ENCODE measurements at regions of chr16 and their contacts with region 1.

Region 1: DNA sequence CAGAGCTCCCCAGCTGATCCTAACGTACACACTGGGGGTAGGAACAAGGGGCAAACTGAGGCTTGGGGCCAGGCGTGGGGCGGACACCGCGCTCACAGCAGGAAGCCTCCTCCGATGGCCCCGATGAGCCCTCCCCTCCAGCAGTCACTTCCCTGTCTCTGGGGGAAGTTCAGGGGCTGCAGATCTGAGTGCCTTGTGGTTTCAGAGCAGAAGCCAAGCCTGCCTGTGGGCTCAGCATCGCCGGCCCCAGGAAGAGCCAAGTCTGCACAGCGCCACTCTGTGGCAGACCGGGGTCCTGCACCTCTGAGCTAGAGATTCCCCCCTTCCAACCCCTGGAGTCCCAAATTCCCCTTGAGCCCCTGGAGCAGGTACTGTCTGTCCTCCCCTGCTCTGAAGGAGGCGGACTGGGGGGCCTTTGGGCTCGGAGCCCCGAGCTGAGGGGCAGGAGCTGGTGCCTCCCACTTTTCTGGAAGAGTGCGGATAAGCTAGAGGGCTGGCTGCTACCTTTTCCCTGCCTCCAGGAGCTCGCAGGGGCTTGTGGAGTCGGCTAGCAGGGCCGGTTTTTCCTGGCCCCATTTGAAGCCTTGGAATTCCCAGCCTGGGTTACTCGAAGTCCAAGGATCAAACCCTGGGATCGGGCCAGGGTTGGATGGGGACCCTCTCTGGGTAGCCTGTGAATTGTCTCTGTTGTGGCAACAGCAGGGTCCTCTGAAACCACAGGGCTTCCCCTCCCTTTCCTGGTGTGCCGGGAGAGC is 2.9 kb downstream of the GSE1 start:
- DNase-seq: peak; percentile 92
- ATAC-seq: peak; percentile 23
- H3K4me3 Mint-ChIP-seq: peak overlapping the region; percentile 64
- H3K27ac Mint-ChIP-seq: no peak overlapping the region; the same call in 1 of the 2 replicates
- H3K4me1 Mint-ChIP-seq: peaks cover 50% of the 10 kb centered on the region
- H3K27me3 Mint-ChIP-seq: no peaks in the 10 kb centered on the region
- CTCF ChIP-seq: peak; percentile 97

Region 2: DNA sequence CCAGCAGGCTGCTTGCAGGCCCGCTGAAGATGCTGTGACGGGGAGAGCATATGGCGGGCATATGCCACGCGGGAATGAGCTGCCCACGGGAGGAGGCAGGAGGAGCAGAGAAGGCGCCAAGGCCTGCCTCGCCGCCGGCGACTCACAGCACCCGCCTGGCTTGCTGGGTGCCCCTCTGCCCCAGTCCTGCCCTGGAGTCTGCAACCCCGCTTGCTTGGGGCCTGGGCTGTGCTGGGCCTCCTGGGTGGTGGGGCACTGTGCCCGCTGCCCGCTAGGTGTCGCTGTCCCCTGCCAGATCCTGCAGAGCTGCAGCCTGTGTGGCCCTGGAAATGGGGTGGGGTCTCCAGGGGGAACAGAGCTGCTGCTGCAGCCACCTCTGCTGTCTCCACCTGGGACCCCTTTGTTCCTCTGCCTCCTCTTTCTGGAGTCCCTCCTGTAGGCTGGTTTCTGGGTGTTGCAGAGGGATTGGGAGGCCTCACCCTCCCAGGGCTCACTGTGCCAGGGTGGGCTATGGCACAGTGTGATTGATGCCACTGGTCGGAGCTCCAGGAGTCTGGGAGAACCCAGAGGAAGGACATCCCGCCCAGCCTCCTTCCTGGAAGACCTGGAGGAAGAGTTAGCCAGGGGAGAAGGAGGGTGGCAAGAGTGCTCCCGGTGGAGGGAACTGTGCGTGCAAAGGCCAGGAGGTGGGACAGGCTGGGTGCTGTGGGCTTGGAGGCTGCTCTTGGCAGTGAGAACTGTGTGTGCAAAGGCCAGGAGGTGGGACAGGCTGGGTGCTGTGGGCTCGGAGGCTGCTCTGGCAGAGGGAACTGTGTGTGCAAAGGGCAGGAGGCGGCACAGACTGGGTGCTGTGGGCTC is 362.7 kb before region 1 on chr16:
- CTCF ChIA-PET with region 1: interaction called, 11 read pairs
- POLR2A ChIA-PET with region 1: no interaction called
- DNase-seq: peak; percentile 87
- ATAC-seq: peak; percentile 91
- H3K4me3 Mint-ChIP-seq: no peak overlapping the region
- H3K27ac Mint-ChIP-seq: no peak overlapping the region
- H3K4me1 Mint-ChIP-seq: no peaks in the 10 kb centered on the region
- H3K27me3 Mint-ChIP-seq: no peaks in the 10 kb centered on the region; the same call in 1 of the 2 replicates
- CTCF ChIP-seq: peak; percentile 99

Region 3: DNA sequence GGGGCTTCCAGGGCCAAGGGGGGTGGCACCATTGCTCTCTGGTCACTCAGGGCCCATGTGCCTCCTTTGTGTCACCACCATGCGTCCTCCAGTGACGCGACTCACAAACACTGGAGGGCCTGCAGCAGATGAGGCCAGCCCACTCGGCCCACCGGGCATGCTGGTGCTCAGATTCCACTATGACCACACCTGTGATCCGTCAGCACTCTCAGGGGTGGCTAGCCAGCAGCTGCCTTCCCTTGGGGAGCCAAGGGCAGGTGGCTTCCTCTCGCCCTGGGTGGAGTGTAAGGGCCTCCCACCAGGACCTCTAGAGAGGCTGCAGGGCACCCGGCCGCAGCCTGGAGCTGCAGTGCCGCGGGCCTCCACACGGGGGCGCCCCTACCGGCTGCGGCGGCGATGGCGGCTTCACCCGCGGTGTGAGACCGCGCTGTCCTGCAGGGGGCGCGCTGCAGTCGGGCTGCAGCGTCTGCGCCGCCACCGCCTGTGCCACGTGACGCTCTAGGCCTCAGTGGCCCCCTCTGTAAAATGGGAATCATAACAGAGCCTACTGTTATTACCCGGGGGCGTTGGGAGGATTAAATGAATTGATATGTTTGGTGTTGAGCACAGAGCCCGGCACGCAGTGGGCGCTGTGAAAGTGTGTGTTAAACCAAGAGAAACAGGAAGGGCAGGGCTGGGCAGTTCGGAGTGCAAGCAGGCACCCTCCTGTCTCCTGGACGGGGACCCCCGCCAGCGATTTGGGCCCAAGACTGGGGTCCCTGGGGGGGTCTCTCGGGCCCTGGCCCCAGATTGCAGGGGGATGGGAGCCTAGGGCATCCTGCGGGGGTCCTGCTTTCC is 195.3 kb before region 1 on chr16:
- CTCF ChIA-PET with region 1: interaction called, 66 read pairs
- POLR2A ChIA-PET with region 1: no interaction called
- DNase-seq: peak; percentile 73
- ATAC-seq: peak; percentile 27
- H3K4me3 Mint-ChIP-seq: no peak overlapping the region
- H3K27ac Mint-ChIP-seq: no peak overlapping the region
- H3K4me1 Mint-ChIP-seq: peaks cover 26% of the 10 kb centered on the region
- H3K27me3 Mint-ChIP-seq: no peaks in the 10 kb centered on the region
- CTCF ChIP-seq: peak; percentile 100

Region 4: DNA sequence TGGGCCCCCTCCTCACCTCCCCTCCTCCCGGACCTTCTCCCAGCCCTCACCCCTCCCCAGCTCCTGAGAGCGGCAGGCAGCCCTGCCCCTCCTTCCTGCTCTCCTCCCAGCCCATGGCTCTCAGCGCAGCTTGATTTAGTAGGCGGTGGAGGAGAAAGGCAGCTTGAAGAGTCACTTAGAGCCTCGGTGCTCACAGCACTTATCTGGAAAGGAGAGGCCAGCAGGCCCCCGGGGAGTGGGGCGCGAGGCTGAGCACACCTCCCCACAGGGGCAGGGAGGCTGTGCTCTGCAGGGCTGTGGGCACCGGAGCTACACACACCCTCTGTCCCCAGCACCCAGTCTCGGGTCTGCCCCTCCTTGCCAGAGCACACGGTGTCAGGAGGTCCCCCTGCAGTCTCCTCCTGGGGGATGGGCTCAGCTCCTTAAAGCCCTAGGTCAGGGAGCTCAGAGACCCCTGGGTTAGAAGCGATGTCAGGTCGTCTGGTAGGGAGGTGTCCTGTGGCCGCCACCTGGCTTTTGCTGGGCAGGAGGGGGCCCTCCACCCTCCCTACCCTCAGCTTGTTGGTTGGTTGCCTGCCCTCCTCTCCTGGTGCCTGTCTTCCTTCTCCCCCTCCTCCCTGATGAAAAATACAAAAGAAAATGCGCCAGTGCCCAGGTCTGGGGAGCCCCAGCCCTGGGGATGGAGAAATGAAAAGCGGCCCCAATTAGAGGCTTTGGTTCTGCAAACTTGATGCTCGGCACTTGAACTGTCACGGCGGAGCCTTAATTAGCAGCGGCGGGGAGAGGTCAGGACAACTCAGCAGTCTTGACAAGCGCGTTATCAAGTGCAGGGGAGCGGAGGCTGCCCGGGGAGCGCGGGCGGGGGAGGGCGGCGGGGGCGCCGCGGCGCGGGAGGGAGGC is 154.0 kb before region 1 on chr16:
- CTCF ChIA-PET with region 1: interaction called, 24 read pairs
- POLR2A ChIA-PET with region 1: interaction called, 5 read pairs
- DNase-seq: peak; percentile 73
- ATAC-seq: peak; percentile 77
- H3K4me3 Mint-ChIP-seq: peak overlapping the region; percentile 76
- H3K27ac Mint-ChIP-seq: no peak overlapping the region
- H3K4me1 Mint-ChIP-seq: peaks cover 32% of the 10 kb centered on the region
- H3K27me3 Mint-ChIP-seq: peaks cover 60% of the 10 kb centered on the region
- CTCF ChIP-seq: no peak

Region 5: DNA sequence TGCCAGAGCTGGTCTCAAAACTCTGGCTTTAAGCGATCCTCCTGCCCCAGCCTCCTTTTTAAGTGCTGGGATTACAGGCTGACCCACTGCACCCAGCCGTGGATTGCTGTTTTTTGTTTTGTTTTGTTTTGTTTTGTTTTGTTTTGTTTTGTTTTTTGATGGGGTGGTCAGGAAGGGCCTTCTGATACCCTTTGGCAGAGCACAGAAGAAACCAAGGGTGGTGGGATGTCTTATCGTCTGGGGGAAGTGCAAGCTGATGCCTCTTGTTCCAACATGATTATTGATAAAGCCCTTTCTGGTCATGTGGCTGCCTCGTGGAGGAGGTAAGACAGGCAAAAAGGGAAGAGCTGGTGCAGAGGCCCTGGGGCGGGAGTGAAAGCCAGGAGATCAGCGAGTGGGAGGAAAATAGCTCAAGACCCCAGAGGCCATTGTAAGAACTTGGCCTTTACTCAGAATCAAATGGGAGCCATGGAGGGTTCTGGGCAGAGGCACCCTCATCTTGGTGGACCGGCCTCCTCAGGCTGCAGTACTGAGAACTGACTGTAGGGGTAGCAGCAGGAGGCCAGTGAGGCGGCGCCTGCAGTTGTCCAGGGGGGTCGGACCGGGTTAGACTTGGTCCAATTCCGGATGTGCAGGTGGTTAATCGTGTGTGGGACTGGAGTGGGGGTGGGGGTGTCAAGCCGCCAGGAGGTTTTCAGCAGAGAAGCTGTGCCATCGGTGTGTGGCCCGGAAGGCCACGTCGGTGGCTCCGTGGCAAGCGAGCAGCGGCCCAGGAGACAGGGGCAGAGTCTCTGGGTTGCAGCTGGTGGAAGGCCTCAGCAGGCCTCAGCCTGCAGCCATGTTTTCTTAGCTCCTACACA is 87.3 kb before region 1 on chr16:
- CTCF ChIA-PET with region 1: interaction called, 12 read pairs
- POLR2A ChIA-PET with region 1: no interaction called
- DNase-seq: no peak
- ATAC-seq: no peak
- H3K4me3 Mint-ChIP-seq: no peak overlapping the region
- H3K27ac Mint-ChIP-seq: peak overlapping the region; percentile 53; the same call in 1 of the 2 replicates
- H3K4me1 Mint-ChIP-seq: peaks cover 32% of the 10 kb centered on the region
- H3K27me3 Mint-ChIP-seq: no peaks in the 10 kb centered on the region
- CTCF ChIP-seq: peak; percentile 38; the same call in 1 of the 2 replicates

Region 6: GRCh38 chr16:85583491-85584181 is 32.4 kb before region 1 on chr16:
- CTCF ChIA-PET with region 1: interaction called, 25 read pairs
- POLR2A ChIA-PET with region 1: interaction called, 7 read pairs
- DNase-seq: no peak
- ATAC-seq: peak; percentile 2; the same call in 1 of the 2 replicates
- H3K4me3 Mint-ChIP-seq: peak overlapping the region; percentile 35; the same call in 1 of the 2 replicates
- H3K27ac Mint-ChIP-seq: peak overlapping the region; percentile 60; the same call in 1 of the 2 replicates
- H3K4me1 Mint-ChIP-seq: peaks cover 96% of the 10 kb centered on the region
- H3K27me3 Mint-ChIP-seq: peaks cover 63% of the 10 kb centered on the region
- CTCF ChIP-seq: no peak

Region 7: GRCh38 chr16:85639536-85640253 is 23.7 kb after region 1 on chr16:
- CTCF ChIA-PET with region 1: interaction called, 24 read pairs
- POLR2A ChIA-PET with region 1: no interaction called
- DNase-seq: no peak
- ATAC-seq: no peak
- H3K4me3 Mint-ChIP-seq: no peak overlapping the region
- H3K27ac Mint-ChIP-seq: no peak overlapping the region
- H3K4me1 Mint-ChIP-seq: no peaks in the 10 kb centered on the region; the same call in 1 of the 2 replicates
- H3K27me3 Mint-ChIP-seq: no peaks in the 10 kb centered on the region
- CTCF ChIP-seq: no peak

Measured in WTC11 (cell line).